Dorsolateral prefrontal cortex (tissue), 120 donors: ENCODE measurements at regions of chr12 and their contacts with region 1.

Region 1: DNA sequence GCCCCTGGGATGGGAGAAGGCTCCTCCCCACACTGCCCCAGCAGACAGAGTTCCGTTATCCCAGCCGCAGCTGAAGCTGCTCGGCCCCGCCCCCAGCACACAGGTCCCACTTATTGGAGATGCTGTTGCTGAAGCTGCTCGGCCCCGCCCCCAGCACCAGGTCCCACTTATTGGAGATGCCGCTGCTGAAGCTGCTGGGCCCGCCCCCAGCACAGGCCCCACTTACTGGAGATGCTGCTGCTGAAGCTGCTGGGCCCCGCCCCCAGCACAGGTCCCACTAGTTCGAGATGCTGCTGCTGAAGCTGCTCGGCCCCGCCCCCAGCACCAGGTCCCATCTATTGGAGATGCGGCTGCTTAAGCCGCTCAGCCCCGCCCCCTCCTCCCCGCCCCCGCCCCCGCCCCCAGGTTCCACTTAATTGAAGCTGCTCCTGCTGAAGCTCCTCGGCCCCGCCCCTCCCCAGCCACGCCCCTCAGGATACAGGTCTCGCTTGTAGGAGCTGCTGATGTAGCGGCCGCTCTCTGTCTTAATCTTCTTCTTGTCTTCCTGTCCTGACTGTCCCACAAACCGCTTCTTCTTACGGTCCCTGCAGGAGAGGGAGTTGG is 12.0 kb downstream of the CFAP73 start:
- DNase-seq: peak; percentile 8 to 94 (median 81)
- H3K4me3 ChIP-seq: peak overlapping the region in 55 of 59 donors; percentile 11 to 64 (median 46)
- H3K27ac ChIP-seq: no peak overlapping the region
- H3K27me3 ChIP-seq: no peaks in the 10 kb centered on the region
- CTCF ChIP-seq: no peak

Region 2: DNA sequence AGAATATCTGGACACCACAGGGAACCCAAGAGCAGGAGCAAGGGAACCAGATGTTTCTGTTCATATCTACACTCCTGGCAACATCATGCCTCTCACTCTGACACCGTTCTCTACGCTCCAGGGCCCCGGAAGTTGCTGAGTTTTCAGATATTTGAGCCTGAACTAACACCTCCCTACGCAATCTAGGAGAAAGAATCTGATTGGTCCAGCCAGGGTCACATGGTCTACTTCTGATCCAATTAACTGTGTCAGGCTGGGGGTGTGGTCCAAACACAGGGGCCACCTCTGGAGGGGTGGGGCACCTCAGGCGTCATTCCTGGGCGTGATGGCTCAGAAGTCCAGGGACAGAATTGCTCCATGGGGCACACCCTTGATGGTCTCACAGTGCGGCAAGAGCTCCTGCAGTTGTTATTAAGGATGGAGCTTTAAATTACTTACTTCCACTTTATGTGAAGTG is 577.2 kb before region 1 on chr12:
- intact Hi-C with region 1: no loop called
- DNase-seq: no peak
- H3K4me3 ChIP-seq: no peak overlapping the region
- H3K27ac ChIP-seq: no peak overlapping the region
- H3K27me3 ChIP-seq: peaks cover 0 to 10% (median 0%) of the 10 kb centered on the region in 45 donors
- CTCF ChIP-seq: no peak

Region 3: GRCh38 chr12:113056631-113057488 is 104.7 kb before region 1 on chr12 and contains the start of gene DTX1:
- intact Hi-C with region 1: loop called in 1 of 2 experiments (anchors 5 kb)
- DNase-seq: peak in 5 of 10 donors; percentile 52 to 70 (median 60)
- H3K4me3 ChIP-seq: peak within 1 kb of the TSS; percentile 47 to 83 (median 73)
- H3K27ac ChIP-seq: peak within 1 kb of the TSS in 56 of 59 donors; percentile 8 to 91 (median 79)
- H3K27me3 ChIP-seq: peaks cover 0 to 18% (median 0%) of the 10 kb centered on the region in 45 donors
- CTCF ChIP-seq: no peak
- total RNA-seq, gene DTX1: 24.5 to 108 (median 51.0) TPM

Region 4: GRCh38 chr12:113116875-113117274 is 44.6 kb before region 1 on chr12:
- intact Hi-C with region 1: no loop called
- DNase-seq: peak in 2 of 10 donors; percentile 43 to 55
- H3K4me3 ChIP-seq: no peak overlapping the region
- H3K27ac ChIP-seq: peak overlapping the region in 35 of 59 donors; percentile 1 to 78 (median 50)
- H3K27me3 ChIP-seq: no peaks in the 10 kb centered on the region
- CTCF ChIP-seq: peak in 3 of 56 donors; percentile 13 to 20 (median 13)